Endothelial cell of umbilical vein (primary cell): ENCODE measurements at regions of chr2 and their contacts with region 1.

Region 1: DNA sequence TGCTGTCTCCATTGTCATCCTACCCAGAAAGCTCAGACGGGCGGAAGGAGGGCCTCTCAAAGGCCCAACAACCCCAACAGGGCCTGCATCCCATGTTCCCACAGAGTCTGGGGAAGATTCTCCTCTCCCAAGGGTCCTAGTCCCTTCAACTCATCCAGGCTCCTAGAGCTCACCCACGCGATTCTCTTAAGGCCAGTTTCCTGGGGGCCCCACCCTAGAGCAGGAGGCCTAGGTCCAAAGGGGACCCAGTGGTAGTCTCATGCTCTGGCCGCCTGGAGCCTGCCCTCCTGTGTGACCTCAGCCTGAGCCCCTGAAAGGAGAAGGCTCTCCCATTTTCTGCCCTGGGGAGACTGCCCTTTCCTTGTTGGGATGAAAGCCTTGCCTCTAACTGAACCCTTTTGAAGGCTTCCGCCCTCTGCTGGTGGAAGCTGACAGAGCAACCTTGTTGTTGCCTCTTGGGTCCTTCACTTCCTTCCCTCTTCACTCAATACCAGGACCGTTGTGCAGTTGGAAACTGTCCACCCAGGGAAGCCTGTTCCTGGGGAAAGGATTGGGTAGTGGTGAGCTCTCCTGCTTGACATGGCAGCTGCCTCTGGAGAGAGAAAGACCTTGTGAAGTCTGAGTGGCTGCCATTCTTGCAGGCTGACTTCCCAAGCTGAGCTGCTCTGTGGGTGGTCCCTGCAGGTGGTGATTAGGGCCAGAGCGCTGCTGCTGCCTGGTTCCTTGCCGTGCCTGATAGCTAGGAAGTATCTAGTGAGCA is 86.0 kb upstream of the ALPP start:
- DNase-seq: peak; percentile 57
- H3K4me3 ChIP-seq: no peak overlapping the region
- H3K27ac ChIP-seq: no peak overlapping the region
- H3K4me1 ChIP-seq: no peaks in the 10 kb centered on the region
- H3K27me3 ChIP-seq: no peaks in the 10 kb centered on the region
- CTCF ChIP-seq: peak; percentile 73 to 89
- POLR2A ChIP-seq: no peak

Region 2: GRCh38 chr2:231732604-231733003 is 560.0 kb before region 1 on chr2:
- CTCF ChIA-PET with region 1: no interaction called
- POLR2A ChIA-PET with region 1: no interaction called
- dilution Hi-C with region 1: no loop called
- intact Hi-C with region 1: no loop called
- DNase-seq: no peak
- H3K4me3 ChIP-seq: no peak overlapping the region
- H3K27ac ChIP-seq: no peak overlapping the region
- H3K4me1 ChIP-seq: no peaks in the 10 kb centered on the region
- H3K27me3 ChIP-seq: no peaks in the 10 kb centered on the region
- CTCF ChIP-seq: no peak
- POLR2A ChIP-seq: no peak

Region 3: DNA sequence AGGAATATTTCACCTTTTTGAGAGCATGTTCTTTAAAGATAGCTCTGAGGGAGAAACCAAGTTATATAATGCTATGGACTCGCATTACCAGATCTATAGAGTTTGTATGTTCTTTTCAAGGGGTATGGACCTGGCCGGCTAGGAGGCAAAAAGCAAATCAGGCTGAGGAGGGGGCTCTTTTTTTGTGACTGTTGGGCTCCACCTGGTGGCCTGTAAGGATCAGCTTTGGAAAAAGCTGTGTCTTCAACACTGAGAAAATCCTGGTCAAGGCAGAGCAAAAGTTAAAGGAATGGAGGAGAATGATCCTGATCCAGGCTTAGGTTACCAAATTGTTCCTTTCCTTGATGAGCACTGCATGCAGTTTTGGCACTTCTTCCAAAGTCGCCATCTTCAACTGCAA is 150.5 kb before region 1 on chr2:
- CTCF ChIA-PET with region 1: interaction called, 12 read pairs
- POLR2A ChIA-PET with region 1: no interaction called
- dilution Hi-C with region 1: no loop called
- intact Hi-C with region 1: no loop called
- DNase-seq: peak; percentile 41
- H3K4me3 ChIP-seq: no peak overlapping the region
- H3K27ac ChIP-seq: no peak overlapping the region
- H3K4me1 ChIP-seq: peaks cover 12% of the 10 kb centered on the region
- H3K27me3 ChIP-seq: no peaks in the 10 kb centered on the region
- CTCF ChIP-seq: peak; percentile 64 to 70
- POLR2A ChIP-seq: no peak

Region 4: DNA sequence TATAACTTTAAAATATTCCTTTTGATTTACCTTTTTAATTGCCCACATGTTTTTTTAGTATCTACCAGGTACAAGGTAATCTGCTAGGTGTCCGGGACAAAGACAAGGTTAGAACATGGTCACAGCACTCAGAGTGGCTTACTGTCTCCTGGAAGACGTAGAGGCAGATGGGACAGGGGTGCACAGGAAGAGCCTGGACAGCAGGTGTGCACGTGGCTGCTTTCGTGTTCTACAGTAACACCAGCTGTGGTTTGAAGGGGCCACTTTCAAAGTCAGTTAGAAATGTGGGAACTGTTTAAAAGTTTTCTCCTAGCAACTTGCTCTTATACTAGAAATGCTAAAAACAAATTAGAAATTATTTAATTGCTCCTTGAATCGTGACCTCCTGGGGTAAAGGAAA is 16.9 kb before region 1 on chr2:
- CTCF ChIA-PET with region 1: interaction called, 3 read pairs
- POLR2A ChIA-PET with region 1: no interaction called
- dilution Hi-C with region 1: no loop called
- intact Hi-C with region 1: loop called (anchors 2 kb)
- DNase-seq: no peak
- H3K4me3 ChIP-seq: no peak overlapping the region
- H3K27ac ChIP-seq: no peak overlapping the region
- H3K4me1 ChIP-seq: no peaks in the 10 kb centered on the region
- H3K27me3 ChIP-seq: no peaks in the 10 kb centered on the region
- CTCF ChIP-seq: no peak
- POLR2A ChIP-seq: no peak

Region 5: GRCh38 chr2:232315049-232315922 is 22.7 kb after region 1 on chr2:
- CTCF ChIA-PET with region 1: interaction called, 34 read pairs
- POLR2A ChIA-PET with region 1: no interaction called
- dilution Hi-C with region 1: no loop called
- intact Hi-C with region 1: no loop called
- DNase-seq: peak; percentile 83
- H3K4me3 ChIP-seq: no peak overlapping the region
- H3K27ac ChIP-seq: peak overlapping the region; percentile 83
- H3K4me1 ChIP-seq: peaks cover 35% of the 10 kb centered on the region
- H3K27me3 ChIP-seq: no peaks in the 10 kb centered on the region
- CTCF ChIP-seq: peak; percentile 20 to 28
- POLR2A ChIP-seq: no peak

Region 6: GRCh38 chr2:232400256-232401015 is 107.9 kb after region 1 on chr2:
- CTCF ChIA-PET with region 1: no interaction called
- POLR2A ChIA-PET with region 1: no interaction called
- dilution Hi-C with region 1: no loop called
- intact Hi-C with region 1: no loop called
- DNase-seq: no peak
- H3K4me3 ChIP-seq: no peak overlapping the region
- H3K27ac ChIP-seq: no peak overlapping the region
- H3K4me1 ChIP-seq: no peaks in the 10 kb centered on the region
- H3K27me3 ChIP-seq: peaks cover 0 to 5% of the 10 kb centered on the region in 2 experiments
- CTCF ChIP-seq: no peak
- POLR2A ChIP-seq: no peak